Adrenal gland (tissue), 19 donors: ENCODE measurements at regions of chr4 and their contacts with region 1.

Region 1: DNA sequence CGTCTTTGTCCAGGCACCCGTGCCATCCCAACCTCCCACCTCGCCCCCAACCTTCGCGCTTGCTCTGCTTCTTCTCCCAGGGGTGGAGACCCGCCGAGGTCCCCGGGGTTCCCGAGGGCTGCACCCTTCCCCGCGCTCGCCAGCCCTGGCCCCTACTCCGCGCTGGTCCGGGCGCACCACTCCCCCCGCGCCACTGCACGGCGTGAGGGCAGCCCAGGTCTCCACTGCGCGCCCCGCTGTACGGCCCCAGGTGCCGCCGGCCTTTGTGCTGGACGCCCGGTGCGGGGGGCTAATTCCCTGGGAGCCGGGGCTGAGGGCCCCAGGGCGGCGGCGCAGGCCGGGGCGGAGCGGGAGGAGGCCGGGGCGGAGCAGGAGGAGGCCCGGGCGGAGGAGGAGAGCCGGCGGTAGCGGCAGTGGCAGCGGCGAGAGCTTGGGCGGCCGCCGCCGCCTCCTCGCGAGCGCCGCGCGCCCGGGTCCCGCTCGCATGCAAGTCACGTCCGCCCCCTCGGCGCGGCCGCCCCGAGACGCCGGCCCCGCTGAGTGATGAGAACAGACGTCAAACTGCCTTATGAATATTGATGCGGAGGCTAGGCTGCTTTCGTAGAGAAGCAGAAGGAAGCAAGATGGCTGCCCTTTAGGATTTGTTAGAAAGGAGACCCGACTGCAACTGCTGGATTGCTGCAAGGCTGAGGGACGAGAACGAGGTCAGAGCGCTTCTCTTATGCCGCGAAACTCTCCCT is at the start of gene TET2:
- DNase-seq: peak; percentile 75 to 91 (median 81)
- H3K4me3 ChIP-seq: peak within 1 kb of the TSS; percentile 62 to 77 (median 65)
- H3K27ac ChIP-seq: peak within 1 kb of the TSS; percentile 46 to 89 (median 87)
- H3K4me1 ChIP-seq: peaks cover 11 to 27% of the 10 kb centered on the region in 2 donors
- H3K27me3 ChIP-seq: no peaks in the 10 kb centered on the region
- CTCF ChIP-seq: peak in 1 of 6 experiments; percentile 31
- POLR2A ChIP-seq: peak; percentile 61 to 81
- total RNA-seq, gene TET2: 7.7 to 26.1 (median 17.0) TPM

Region 2: GRCh38 chr4:105002278-105002677 is 144.2 kb before region 1 on chr4:
- intact Hi-C with region 1: no loop called
- DNase-seq: no peak
- H3K4me3 ChIP-seq: no peak overlapping the region
- H3K27ac ChIP-seq: no peak overlapping the region
- H3K4me1 ChIP-seq: no peaks in the 10 kb centered on the region
- H3K27me3 ChIP-seq: no peaks in the 10 kb centered on the region
- CTCF ChIP-seq: no peak
- POLR2A ChIP-seq: no peak

Region 3: DNA sequence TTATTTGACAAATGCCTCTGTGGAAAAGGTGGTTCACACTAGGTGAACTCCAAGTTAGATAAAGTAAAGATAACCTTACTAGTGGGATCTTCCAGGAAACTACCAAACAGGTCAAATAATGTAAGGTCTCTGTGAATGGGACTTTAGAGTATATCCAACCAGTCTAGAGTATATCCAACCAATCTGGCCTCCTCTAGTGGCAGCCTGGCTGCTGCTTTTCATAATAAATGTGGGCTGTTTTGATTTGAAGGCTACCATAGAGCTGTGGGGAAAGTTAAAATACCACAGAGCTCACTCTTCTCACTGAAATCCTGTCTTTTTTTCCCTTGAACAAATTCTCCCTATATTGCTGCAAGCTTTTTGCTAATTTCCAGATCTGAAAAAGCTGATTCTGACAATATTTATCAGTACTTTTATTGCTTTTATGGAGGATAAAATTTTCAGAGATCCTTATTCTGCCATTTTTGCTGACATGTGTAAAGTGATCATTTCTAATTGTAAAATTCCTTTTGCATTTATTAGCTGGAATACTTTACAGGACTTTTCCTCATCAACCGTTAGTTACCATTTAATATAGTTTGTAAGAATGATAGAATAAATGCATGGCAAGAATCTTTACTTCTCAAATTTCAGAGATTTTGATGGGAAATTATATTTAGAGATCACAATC is 111.5 kb after region 1 on chr4:
- intact Hi-C with region 1: loop called in 1 of 2 experiments (anchors 10 kb)
- DNase-seq: no peak
- H3K4me3 ChIP-seq: no peak overlapping the region
- H3K27ac ChIP-seq: no peak overlapping the region
- H3K4me1 ChIP-seq: no peaks in the 10 kb centered on the region
- H3K27me3 ChIP-seq: no peaks in the 10 kb centered on the region
- CTCF ChIP-seq: no peak
- POLR2A ChIP-seq: no peak